ENCODE measurements at regions of chr13 and their contacts with region 1.

Region 1: DNA sequence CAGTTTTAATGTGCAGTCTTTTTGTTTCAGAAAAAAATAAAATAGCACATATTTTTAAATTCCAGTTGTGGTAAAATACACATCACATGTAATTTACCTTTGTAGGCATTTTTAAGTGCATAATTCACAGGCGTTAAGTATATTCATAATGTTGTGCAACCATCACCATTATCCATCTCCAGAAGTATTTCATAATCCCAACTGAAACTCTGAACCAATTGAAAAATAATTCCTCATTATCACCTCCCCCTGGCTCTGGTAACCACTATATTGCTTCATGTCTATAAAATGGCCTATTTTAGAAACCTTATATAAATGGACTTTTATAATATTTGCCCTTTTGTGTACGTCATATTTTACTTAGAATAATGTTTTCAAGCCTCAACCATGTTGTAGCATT is 756.5 kb upstream of the KLHL1 start:
- DNase-seq: no peak
- H3K4me3 ChIP-seq: no peak overlapping the region
- H3K27ac ChIP-seq: no peak overlapping the region
- H3K4me1 ChIP-seq: no peaks in the 10 kb centered on the region
- H3K27me3 ChIP-seq: no peaks in the 10 kb centered on the region
- CTCF ChIP-seq: no peak
- EP300 ChIP-seq: no peak
- POLR2A ChIP-seq: no peak

Region 2: GRCh38 chr13:71677124-71677523 is 812.4 kb after region 1 on chr13:
- intact Hi-C with region 1: loop called in 1 of 4 experiments (anchors 5 kb)
- DNase-seq: no peak
- H3K4me3 ChIP-seq: no peak overlapping the region
- H3K27ac ChIP-seq: no peak overlapping the region
- H3K4me1 ChIP-seq: no peaks in the 10 kb centered on the region
- H3K27me3 ChIP-seq: no peaks in the 10 kb centered on the region
- CTCF ChIP-seq: no peak
- EP300 ChIP-seq: no peak
- POLR2A ChIP-seq: no peak

Region 3: GRCh38 chr13:71979616-71980015 is 1114.9 kb after region 1 on chr13:
- intact Hi-C with region 1: no loop called
- DNase-seq: no peak
- H3K4me3 ChIP-seq: no peak overlapping the region
- H3K27ac ChIP-seq: no peak overlapping the region
- H3K4me1 ChIP-seq: no peaks in the 10 kb centered on the region
- H3K27me3 ChIP-seq: no peaks in the 10 kb centered on the region
- CTCF ChIP-seq: no peak
- EP300 ChIP-seq: no peak
- POLR2A ChIP-seq: no peak

Measured in ovary (tissue), 10 donors.